Dorsolateral prefrontal cortex (tissue), 120 donors: ENCODE measurements at regions of chr19 and their contacts with region 1.

Region 1: GRCh38 chr19:42283143-42284065 is 14.4 kb downstream of the CIC start:
- DNase-seq: peak; percentile 93 to 97 (median 96)
- H3K4me3 ChIP-seq: peak overlapping the region; percentile 37 to 90 (median 65)
- H3K27ac ChIP-seq: peak overlapping the region; percentile 95 to 100 (median 99)
- H3K27me3 ChIP-seq: no peaks in the 10 kb centered on the region
- CTCF ChIP-seq: peak in 33 of 56 donors; percentile 13 to 56 (median 29)

Region 2: DNA sequence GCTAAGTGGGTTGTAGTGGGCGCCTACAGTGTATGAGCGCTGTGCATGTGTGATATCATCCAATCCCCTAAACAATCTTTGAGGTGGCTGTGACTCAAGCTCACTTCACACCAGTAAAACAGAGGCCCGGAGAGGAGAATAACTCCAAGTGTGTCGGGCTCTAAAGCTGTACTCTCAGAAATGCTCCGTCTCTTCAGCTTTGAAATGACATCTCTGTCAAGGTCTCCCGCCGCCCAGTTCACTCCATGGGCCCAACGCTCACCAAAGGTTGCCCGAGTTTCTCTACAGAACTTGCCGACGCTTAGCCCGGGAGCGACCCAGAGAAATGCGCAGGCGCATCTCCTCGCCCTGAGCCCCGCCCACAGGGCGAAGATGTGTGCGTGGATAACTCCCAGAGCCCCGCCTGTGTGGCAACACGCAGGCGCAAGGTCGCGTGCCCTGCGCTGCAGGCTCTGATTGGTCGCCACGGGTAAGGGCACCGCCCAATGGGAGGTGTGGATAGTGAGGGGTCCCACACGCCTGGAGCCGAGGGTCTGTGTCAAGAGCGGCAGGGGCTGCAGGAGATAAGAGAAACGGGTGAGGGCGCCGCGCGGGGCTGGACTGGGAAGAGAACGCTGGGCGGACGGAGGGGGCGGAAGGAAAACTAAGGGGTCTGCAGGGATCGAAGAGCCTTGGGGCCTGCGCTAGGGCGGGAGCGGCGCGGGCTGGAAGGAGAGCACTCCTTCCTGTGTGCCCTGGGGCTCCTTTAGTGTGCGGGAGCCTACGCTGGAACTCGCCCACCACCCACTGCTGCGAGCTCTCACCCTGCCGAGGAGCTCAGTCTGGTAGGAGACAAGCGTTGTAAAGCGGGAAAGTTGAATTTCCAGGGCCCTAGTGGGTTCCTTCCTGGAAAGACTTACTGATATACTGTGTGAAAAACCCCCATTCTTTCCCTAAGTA is 63.3 kb before region 1 on chr19 and contains the start of gene ZNF526:
- intact Hi-C with region 1: no loop called
- DNase-seq: peak; percentile 95 to 99 (median 97)
- H3K4me3 ChIP-seq: peak within 1 kb of the TSS; percentile 63 to 100 (median 91)
- H3K27ac ChIP-seq: peak within 1 kb of the TSS in 57 of 59 donors; percentile 36 to 100 (median 85)
- H3K27me3 ChIP-seq: no peaks in the 10 kb centered on the region
- CTCF ChIP-seq: peak in 26 of 56 donors; percentile 4 to 52 (median 20)
- total RNA-seq, gene ZNF526: 5.3 to 12.0 (median 7.5) TPM

Region 3: GRCh38 chr19:42254989-42255765 is 28.2 kb before region 1 on chr19 and contains the start of gene ERF:
- intact Hi-C with region 1: loop called in 1 of 2 experiments (anchors 1 kb)
- DNase-seq: peak; percentile 83 to 97 (median 94)
- H3K4me3 ChIP-seq: peak within 1 kb of the TSS; percentile 80 to 100 (median 97)
- H3K27ac ChIP-seq: peak within 1 kb of the TSS; percentile 93 to 100 (median 99)
- H3K27me3 ChIP-seq: no peaks in the 10 kb centered on the region
- CTCF ChIP-seq: peak in 1 of 56 donors; percentile 14
- total RNA-seq, gene ERF: 22.2 to 145 (median 47.8) TPM

Region 4: DNA sequence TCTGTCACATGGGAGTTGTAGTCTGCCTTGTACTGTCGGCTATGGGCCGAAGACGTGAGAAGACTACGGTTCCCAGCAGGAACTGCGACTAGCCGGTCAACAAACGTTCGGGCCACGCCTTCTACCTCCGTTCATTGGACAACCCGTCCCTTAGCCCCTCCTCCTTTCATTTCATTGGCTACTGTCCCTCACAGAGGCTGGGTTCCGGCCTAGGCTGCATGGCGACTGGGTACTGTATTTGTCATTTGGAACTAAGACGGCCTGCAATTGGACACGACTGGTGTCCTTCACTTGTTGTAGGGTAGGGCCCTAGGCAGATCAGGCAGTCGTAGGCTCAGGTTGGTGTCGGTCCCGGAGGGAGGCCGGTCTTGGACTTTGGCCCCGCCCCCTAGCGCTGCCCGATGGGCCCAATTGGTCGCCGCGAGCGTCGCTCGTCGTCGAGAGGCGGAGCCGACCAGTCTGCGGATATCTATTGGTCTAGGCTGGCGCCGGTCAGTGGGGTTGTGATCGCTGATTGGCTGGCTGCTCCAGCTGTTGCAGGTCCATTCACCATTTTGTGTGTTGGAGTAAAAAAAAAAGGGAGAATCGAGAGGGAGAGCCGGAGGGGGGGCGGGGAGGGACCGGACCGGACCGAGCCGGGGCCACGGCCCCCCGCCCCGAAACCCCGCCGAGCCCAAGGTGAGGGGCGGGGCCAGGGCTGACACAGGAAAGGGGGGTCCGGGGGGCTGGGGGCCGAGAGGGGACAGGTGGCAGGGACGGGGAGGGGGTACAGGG is 14.5 kb before region 1 on chr19 and contains the start of gene CIC:
- intact Hi-C with region 1: loop called in 1 of 2 experiments (anchors 1 kb)
- DNase-seq: peak; percentile 97 to 100 (median 100)
- H3K4me3 ChIP-seq: peak within 1 kb of the TSS; percentile 47 to 99 (median 82)
- H3K27ac ChIP-seq: peak within 1 kb of the TSS; percentile 90 to 100 (median 99)
- H3K27me3 ChIP-seq: no peaks in the 10 kb centered on the region
- CTCF ChIP-seq: no peak
- total RNA-seq, gene CIC: 76.5 to 169 (median 103) TPM

Region 5: GRCh38 chr19:42301656-42302203 is 18.3 kb after region 1 on chr19 and contains the start of gene PRR19:
- intact Hi-C with region 1: loop called in 1 of 2 experiments (anchors 2 kb)
- DNase-seq: peak in 1 of 10 donors; percentile 49
- H3K4me3 ChIP-seq: peak within 1 kb of the TSS; percentile 53 to 95 (median 76)
- H3K27ac ChIP-seq: peak within 1 kb of the TSS in 53 of 59 donors; percentile 4 to 87 (median 65)
- H3K27me3 ChIP-seq: no peaks in the 10 kb centered on the region
- CTCF ChIP-seq: no peak
- total RNA-seq, gene PRR19: 0.46 to 5.4 (median 2.1) TPM